CD4-positive, alpha-beta memory T cell (primary cell): ENCODE measurements at regions of chr2 and their contacts with region 1.

Region 1: DNA sequence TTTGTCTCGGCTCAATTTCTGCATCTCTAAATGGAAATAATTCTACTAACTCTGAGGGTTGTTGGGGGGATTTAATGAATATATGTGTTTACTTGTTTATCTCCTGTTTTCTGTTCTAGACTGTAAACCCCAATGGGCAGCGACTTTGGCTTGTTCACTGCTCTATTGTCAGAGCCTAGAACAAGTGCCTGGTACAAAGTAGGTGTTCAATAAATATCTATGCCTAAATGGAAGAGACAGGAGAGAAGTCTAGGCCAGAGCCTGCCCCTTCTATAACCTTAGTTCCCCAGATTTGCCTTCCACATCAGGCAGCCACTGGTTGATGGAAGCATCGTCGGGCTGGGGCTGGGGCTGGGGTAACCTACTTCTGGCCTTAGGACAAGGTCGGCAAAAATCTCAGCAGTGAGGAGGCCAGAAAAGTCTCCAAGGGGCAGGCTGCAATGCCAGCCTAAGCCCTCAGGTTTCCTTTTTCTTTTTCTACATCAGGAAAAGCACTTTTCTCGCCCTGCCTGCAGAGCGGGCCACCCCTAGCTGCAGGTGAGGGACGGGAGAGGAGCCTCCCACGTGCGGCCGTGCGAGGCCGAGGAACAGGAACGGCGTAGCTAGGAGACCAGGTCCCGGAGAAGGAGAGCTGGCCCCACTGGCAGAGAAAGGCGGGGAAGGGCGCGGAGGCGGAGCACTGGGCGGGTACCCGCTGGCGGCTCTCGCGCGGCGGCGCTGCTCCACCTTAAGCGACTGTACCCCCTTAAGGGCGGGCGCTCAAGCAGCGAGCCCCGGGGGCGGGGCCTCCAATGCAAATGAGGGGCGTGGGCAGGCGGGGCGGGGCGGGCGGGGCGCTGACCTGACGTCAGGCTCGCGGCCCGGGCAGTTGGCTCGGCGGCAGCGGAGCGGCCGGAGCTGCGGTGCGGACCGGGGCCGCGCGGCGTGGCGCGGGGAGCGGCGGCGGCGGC is at the start of gene CNNM4:
- DNase-seq: peak; percentile 89 to 93 (median 91)
- H3K4me3 ChIP-seq: peak within 1 kb of the TSS; percentile 67 to 89
- H3K4me3 Mint-ChIP-seq: peak within 1 kb of the TSS; percentile 85 to 92 (median 89)
- H3K27ac ChIP-seq: peak within 1 kb of the TSS; percentile 76
- H3K27ac Mint-ChIP-seq: peak within 1 kb of the TSS; percentile 81 to 93 (median 93)
- H3K4me1 ChIP-seq: peaks cover 56% of the 10 kb centered on the region
- H3K4me1 Mint-ChIP-seq: peaks cover 36 to 59% (median 48%) of the 10 kb centered on the region in 4 donors
- H3K27me3 ChIP-seq: no peaks in the 10 kb centered on the region
- H3K27me3 Mint-ChIP-seq: no peaks in the 10 kb centered on the region
- total RNA-seq, gene CNNM4: 6.7 to 7.2 TPM

Region 2: DNA sequence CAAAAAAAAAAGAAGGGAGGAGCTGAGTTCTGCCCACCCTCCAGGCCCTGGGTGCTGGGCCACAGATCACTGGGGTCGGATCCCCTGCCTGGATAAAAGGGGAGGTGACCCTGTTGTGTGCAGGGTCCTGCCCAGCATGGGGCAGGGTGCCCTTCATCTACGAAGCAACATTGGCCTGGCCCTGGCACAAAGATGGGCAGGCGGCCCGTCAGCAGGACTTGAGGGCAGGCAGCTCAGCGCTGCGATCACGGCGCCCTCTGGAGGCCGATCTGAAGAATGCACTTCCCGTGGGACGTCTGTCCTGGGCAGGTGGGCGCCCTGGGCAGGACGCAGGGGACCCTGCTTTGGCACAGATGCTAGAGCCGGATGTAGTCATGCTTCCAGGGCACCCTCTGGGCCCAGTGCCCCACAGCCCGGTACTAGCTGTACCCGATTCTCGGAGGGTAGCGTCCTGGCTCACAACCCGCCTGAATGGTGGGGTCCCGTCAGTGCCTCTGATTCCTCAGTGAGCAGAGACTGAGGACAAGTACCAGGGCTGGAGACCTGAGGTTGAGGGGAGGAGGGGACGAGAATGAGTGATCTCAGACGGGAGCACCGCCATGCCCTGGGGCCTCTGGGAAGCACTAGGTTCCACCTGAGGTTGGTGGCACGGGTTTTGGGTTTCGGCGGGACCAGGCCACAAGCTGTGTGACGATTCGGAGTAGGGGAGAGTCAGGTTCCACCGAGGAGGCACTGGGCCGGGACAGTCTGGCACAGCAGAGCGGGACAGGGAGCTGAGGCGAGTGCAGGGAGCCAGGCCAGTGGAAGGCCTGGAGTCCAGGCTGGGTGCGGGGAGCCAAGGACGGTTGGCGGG is 205.8 kb before region 1 on chr2:
- CTCF ChIA-PET with region 1: interaction called, 10 read pairs
- POLR2A ChIA-PET with region 1: no interaction called
- intact Hi-C with region 1: no loop called
- DNase-seq: peak; percentile 46 to 80 (median 69)
- H3K4me3 ChIP-seq: no peak overlapping the region
- H3K4me3 Mint-ChIP-seq: peak overlapping the region in 7 of 8 donors; percentile 15 to 69 (median 32)
- H3K27ac ChIP-seq: no peak overlapping the region
- H3K27ac Mint-ChIP-seq: peak overlapping the region in 4 of 7 donors; percentile 22 to 86 (median 82)
- H3K4me1 ChIP-seq: peaks cover 17% of the 10 kb centered on the region
- H3K4me1 Mint-ChIP-seq: peaks cover 1 to 32% (median 12%) of the 10 kb centered on the region in 4 donors
- H3K27me3 ChIP-seq: no peaks in the 10 kb centered on the region
- H3K27me3 Mint-ChIP-seq: no peaks in the 10 kb centered on the region

Region 3: DNA sequence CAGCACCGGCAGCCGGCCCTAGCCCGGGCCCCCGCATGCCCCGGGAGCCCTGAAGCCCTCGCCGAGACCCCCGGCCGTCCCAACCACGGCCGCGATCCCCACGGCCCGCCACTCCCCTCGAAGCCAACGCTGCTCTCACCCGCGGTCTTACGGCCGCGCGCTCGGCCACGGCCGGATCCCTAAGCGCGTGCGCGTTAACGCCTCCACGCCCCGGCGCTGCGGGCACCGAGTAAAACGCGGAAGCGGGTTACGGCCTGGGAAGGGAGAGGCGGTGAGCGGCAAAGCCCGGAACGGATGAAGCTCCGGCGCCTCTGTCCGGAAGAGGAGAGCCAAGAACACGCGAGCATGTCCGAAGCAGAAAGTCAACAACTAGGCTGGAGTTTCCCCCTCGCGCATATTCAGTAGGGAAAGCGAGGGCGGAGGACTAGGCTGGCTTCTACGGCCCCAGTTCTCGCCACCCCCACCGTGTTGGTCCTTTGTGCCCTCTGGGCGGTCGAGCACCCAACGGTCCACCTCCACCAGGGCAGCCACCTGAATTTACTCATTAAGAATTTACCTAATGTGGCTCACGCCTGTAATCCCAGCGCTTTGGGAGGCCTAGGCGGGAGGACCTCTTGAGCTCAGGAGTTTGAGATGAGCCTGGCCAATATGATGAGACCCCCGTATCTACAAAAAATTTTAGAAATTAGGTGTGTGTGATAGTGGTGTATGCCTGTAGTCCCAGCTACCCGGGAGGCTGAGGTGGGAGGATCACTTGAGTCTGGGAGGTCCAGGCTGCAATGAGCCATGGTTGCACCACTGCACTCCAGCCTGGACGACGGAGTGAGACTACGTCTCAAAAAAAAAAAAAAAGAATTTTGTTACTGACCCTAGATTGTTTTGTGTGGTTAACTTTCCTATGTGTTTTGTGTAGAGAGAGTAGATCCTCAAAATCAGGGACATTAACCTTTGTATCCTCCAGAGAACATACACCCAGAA is 121.9 kb before region 1 on chr2 and contains the start of gene KANSL3:
- CTCF ChIA-PET with region 1: interaction called, 9 read pairs
- POLR2A ChIA-PET with region 1: interaction called, 12 read pairs
- intact Hi-C with region 1: loop called (anchors 1 kb)
- DNase-seq: peak; percentile 86 to 93 (median 89)
- H3K4me3 ChIP-seq: peak within 1 kb of the TSS; percentile 79 to 92
- H3K4me3 Mint-ChIP-seq: peak within 1 kb of the TSS; percentile 94 to 100 (median 96)
- H3K27ac ChIP-seq: peak within 1 kb of the TSS; percentile 77
- H3K27ac Mint-ChIP-seq: peak within 1 kb of the TSS; percentile 95 to 99 (median 97)
- H3K4me1 ChIP-seq: peaks cover 39% of the 10 kb centered on the region
- H3K4me1 Mint-ChIP-seq: peaks cover 26 to 42% (median 35%) of the 10 kb centered on the region in 4 donors
- H3K27me3 ChIP-seq: no peaks in the 10 kb centered on the region
- H3K27me3 Mint-ChIP-seq: peaks cover 0 to 2% of the 10 kb centered on the region in 2 donors
- total RNA-seq, gene KANSL3: 63.3 to 69.7 TPM

Region 4: DNA sequence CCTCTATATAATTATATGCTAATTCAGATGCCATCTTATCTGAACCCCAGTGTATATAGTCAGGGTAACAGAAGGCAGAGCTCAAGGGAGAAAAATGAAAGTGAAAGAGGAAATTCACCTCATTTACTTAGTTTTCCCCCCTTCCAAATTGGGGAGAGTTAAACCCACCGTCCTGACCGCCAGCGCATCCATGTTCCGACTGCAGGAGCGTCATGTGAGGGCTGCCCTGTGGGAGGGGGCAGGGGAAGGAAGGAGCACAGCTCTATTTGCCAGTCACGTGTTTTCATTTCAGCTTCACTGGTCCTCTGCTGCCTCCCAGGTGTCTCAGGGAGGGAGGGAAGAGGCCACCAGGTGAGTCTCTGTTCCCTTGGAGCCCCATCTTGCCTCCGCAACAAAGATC is 13.6 kb after region 1 on chr2:
- CTCF ChIA-PET with region 1: interaction called, 36 read pairs
- POLR2A ChIA-PET with region 1: interaction called, 12 read pairs
- intact Hi-C with region 1: no loop called
- DNase-seq: peak; percentile 54 to 82 (median 64)
- H3K4me3 ChIP-seq: peak overlapping the region; percentile 63 to 77
- H3K4me3 Mint-ChIP-seq: peak overlapping the region; percentile 91 to 96 (median 92)
- H3K27ac ChIP-seq: peak overlapping the region; percentile 59
- H3K27ac Mint-ChIP-seq: peak overlapping the region; percentile 85 to 97 (median 93)
- H3K4me1 ChIP-seq: peaks cover 18% of the 10 kb centered on the region
- H3K4me1 Mint-ChIP-seq: peaks cover 17 to 35% (median 21%) of the 10 kb centered on the region in 4 donors
- H3K27me3 ChIP-seq: no peaks in the 10 kb centered on the region
- H3K27me3 Mint-ChIP-seq: no peaks in the 10 kb centered on the region

Region 5: DNA sequence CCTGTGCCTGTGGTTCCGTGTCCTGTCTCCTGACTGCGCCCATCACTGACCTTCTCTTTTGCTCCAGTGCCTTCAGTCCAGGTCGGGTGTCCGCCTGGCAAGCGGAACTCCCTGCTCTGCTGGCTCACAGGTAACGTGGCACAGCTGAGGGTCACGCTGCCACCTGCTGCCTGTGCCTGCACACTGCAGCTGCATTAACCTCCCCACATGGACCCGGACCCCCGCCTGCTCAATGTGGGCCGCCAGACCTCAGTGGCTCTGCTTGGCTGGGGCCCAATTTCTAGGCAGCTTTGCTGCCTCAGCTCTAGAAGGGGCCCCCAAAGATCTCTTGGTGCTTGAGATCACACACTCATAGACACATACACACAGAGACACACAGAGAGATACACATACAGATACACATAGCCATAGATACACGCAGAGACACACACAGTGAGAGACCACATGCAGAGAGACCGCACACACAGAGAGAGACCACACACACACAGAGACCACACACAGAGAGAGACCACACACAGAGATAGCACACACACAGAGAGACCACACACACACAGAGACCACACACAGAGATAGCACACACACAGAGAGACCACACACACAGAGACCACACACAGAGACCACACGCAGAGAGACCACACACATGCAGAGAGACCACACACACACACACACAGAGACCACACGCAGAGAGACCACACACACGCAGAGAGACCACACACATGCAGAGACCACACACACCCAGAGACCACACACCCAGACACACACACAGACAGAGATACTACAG is 40.9 kb after region 1 on chr2:
- CTCF ChIA-PET with region 1: interaction called, 39 read pairs
- POLR2A ChIA-PET with region 1: interaction called, 10 read pairs
- intact Hi-C with region 1: loop called (anchors 2 kb)
- DNase-seq: peak; percentile 65 to 70 (median 65)
- H3K4me3 ChIP-seq: no peak overlapping the region
- H3K4me3 Mint-ChIP-seq: no peak overlapping the region
- H3K27ac ChIP-seq: no peak overlapping the region
- H3K27ac Mint-ChIP-seq: no peak overlapping the region
- H3K4me1 ChIP-seq: peaks cover 28% of the 10 kb centered on the region
- H3K4me1 Mint-ChIP-seq: peaks cover 3 to 7% (median 5%) of the 10 kb centered on the region in 4 donors
- H3K27me3 ChIP-seq: no peaks in the 10 kb centered on the region
- H3K27me3 Mint-ChIP-seq: no peaks in the 10 kb centered on the region

Region 6: DNA sequence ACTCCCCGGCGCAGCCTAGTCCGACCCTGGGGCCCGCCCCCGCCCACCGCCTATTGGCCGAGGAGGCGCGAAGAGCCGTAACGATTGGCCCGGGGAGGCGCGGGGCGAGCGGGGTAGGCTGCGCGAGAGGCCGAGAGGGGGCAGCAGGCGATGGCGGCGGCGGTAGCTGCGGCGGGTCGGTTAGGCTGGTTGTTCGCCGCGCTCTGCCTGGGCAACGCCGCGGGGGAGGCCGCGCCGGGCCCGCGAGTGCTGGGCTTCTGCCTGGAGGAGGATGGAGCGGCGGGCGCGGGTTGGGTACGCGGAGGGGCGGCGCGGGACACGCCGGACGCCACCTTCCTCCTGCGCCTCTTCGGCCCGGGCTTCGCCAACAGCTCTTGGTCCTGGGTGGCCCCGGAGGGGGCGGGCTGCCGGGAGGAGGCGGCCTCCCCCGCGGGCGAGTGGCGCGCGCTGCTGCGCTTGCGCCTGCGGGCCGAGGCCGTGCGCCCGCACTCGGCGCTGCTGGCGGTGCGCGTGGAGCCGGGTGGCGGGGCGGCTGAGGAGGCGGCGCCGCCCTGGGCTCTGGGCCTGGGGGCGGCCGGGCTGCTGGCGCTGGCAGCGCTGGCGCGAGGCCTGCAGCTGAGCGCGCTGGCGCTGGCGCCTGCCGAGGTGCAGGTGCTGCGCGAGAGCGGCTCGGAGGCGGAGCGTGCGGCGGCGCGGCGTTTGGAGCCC is 56.0 kb after region 1 on chr2 and contains the start of gene CNNM3:
- CTCF ChIA-PET with region 1: interaction called, 10 read pairs
- POLR2A ChIA-PET with region 1: interaction called, 54 read pairs
- intact Hi-C with region 1: loop called (anchors 5 kb)
- DNase-seq: peak; percentile 93 to 97 (median 94)
- H3K4me3 ChIP-seq: peak within 1 kb of the TSS; percentile 82 to 83
- H3K4me3 Mint-ChIP-seq: peak within 1 kb of the TSS; percentile 93 to 97 (median 95)
- H3K27ac ChIP-seq: peak within 1 kb of the TSS; percentile 77
- H3K27ac Mint-ChIP-seq: peak within 1 kb of the TSS; percentile 74 to 96 (median 93)
- H3K4me1 ChIP-seq: peaks cover 57% of the 10 kb centered on the region
- H3K4me1 Mint-ChIP-seq: peaks cover 50 to 76% (median 61%) of the 10 kb centered on the region in 4 donors
- H3K27me3 ChIP-seq: no peaks in the 10 kb centered on the region
- H3K27me3 Mint-ChIP-seq: no peaks in the 10 kb centered on the region
- total RNA-seq, gene CNNM3: 55.1 to 57.4 TPM